Esophagus squamous epithelium (tissue), 5 donors: ENCODE measurements at regions of chr20 and their contacts with region 1.

Region 1: DNA sequence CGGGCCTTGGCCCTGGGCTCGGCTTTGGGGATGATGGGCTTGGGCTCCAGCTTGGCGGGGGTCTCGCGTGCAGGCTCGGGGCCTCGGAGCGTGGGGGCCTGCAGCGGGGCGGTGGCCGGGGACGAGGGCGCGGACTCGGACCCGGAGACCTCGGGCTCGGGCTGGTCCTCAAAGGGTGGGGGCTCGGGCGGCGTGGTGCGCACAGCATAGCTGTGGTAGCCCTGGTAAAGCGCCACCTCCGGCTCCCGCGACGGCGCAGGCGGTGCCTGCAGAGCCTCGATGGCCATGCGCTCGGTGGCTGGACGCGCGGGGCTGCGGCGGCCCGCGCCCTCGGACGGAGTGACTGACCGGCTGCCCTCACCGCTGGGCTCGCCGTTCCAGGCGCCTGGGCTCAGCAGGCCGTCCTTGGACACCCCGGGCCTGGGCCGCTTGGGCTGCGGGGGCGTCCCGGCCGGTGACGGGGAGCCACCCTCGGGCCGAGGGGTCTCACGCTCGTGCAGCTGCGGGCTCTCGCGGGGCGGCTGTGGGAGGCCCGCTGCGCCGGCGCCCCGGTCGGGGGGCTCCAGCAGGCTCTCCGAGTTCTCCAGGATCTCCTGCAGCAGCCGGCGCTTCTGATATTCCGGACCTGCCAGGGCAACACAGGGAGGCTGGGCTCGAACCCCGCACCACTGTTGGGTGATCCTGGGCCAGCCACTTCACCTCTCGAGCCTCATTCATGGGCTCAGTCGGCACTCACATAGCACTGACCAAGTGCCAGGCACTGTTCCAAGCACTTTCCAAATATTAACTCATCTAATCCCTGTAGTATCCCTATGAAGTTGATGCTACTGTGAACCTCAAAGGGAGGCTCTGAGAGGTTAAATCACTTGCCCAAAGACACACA is 71.0 kb downstream of the JPH2 start:
- DNase-seq: no peak
- H3K4me3 ChIP-seq: no peak overlapping the region
- H3K27ac ChIP-seq: peak overlapping the region in 3 of 4 donors; percentile 34 to 42 (median 35)
- H3K4me1 ChIP-seq: peaks cover 2 to 30% (median 11%) of the 10 kb centered on the region in 3 donors
- H3K27me3 ChIP-seq: peaks cover 0 to 30% (median 0%) of the 10 kb centered on the region in 4 donors
- CTCF ChIP-seq: no peak
- POLR2A ChIP-seq: no peak

Region 2: DNA sequence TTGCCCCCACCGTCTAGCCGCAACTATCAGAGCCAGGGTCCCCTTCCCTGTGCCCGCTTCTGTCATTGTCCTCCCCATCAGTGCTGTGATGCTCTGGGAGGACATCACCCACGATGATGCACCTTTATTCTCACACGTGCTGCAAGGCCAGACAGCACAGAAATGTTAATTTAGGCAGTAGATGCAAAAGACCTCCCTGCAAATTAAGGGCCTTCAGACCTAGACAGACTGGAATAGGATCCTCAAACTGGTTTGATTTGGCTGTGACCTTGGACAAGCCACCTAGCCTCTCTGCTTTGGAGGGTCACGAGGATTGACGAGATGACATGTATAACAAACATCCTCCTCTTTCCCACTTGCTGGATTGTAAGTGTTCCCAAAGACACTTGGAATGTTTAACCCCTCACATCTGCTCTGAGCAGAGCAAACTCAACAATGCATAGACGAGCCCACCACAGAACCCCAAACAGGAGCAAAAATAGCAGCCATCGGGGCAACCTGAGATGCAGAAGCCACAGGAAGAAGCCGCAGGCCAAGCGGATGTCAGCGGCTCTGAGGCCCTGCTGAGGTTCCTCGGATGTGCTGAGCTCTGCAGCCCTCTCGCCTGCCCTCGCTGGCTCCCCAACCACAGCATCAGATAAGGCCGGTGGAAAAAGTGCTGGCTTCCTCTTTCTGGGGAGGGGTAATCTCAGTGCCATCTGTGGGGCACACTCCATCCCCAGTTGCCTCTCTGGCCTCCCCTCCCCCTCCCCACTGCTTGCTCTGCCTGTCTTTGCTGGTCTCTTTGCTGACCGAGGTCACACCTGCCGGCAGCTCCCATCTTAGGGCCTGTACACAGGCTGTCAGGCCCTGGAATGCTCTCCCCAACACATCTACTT is 166.0 kb before region 1 on chr20:
- intact Hi-C with region 1: no loop called
- DNase-seq: peak; percentile 20
- H3K4me3 ChIP-seq: no peak overlapping the region
- H3K27ac ChIP-seq: no peak overlapping the region
- H3K4me1 ChIP-seq: peaks cover 17 to 80% (median 24%) of the 10 kb centered on the region in 3 donors
- H3K27me3 ChIP-seq: peaks cover 0 to 51% (median 0%) of the 10 kb centered on the region in 4 donors
- CTCF ChIP-seq: no peak
- POLR2A ChIP-seq: no peak

Region 3: DNA sequence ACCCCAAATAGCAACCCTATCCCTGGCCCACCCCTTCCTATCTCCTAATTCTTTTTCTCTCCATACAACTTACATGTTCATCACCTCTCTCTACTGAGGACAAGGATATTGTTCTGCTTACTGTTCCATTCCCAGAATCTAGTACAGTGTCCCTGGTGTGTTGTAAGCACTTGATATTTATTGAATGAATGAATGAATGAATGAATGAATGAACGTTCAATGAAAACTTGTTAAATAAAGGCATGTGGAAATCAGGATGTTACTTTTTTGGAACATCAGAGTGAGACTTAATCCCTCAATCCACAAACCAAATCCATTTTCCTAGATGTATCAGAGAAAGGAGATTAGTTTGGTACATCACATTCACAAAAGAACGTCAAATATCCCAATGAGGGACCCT is 77.8 kb after region 1 on chr20:
- intact Hi-C with region 1: loop called (anchors 5 kb)
- DNase-seq: no peak
- H3K4me3 ChIP-seq: no peak overlapping the region
- H3K27ac ChIP-seq: no peak overlapping the region
- H3K4me1 ChIP-seq: peaks cover 0 to 9% (median 0%) of the 10 kb centered on the region in 3 donors
- H3K27me3 ChIP-seq: no peaks in the 10 kb centered on the region
- CTCF ChIP-seq: no peak
- POLR2A ChIP-seq: no peak

Region 4: GRCh38 chr20:44217342-44218092 is 101.5 kb after region 1 on chr20:
- intact Hi-C with region 1: no loop called
- DNase-seq: no peak
- H3K4me3 ChIP-seq: no peak overlapping the region
- H3K27ac ChIP-seq: no peak overlapping the region
- H3K4me1 ChIP-seq: peaks cover 0 to 17% (median 0%) of the 10 kb centered on the region in 3 donors
- H3K27me3 ChIP-seq: no peaks in the 10 kb centered on the region
- CTCF ChIP-seq: peak; percentile 55 to 92 (median 83)
- POLR2A ChIP-seq: no peak